HepG2 (cell line): ENCODE measurements at regions of chr2 and their contacts with region 1.

Region 1: DNA sequence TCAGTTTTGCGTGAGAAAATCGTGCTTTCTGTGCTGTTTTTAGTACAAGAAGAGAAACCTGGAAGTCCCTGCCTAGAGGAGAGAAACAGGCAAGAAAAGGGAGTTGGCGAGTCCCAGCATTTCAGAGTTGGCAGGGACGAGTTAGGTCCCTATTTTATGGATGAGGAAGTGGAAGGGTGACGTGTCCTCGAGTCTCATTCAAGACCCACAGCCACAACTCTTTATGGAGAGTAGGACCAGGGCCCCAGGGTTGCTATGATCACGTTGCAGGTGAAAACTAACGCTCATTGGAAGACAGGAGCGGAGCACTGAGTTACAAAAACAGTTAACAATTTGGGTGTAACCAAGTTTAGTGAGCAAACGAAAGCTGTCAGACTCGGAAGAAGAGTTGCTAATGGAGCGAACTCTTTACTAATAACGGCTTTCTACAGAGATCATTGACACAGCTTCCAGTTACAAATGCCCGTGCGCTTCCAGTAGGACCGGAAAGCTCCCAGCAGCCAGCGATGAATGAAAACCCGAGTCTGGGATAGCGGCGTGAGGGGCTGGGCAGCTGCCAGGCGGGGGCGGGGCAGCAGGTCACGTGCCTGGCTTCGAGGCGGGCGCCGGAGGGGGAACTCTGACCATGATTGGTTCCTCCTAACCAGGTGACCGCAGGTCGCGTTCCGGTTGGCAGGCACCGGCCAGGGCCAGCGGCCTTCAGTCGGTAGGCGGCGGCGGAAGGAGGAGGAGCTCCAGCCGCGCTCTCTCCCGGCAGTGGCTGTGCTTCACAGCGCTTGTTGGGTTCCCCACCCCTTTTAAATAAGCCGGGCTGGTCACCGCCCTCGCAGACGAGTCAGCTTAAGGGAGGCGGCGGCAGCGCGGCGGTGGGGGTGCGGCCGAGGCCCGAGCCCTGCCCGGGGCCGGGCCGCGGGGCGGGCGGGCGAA is at the start of gene CCNYL1:
- DNase-seq: peak; percentile 99
- ATAC-seq: peak; percentile 96
- H3K4me3 ChIP-seq: peak within 1 kb of the TSS; percentile 86 to 97 (median 91)
- H3K27ac ChIP-seq: peak within 1 kb of the TSS; percentile 96
- H3K4me1 ChIP-seq: peaks cover 40% of the 10 kb centered on the region
- H3K27me3 ChIP-seq: no peaks in the 10 kb centered on the region; a peak in 1 of 5 replicates
- CTCF ChIP-seq: peak; percentile 34
- EP300 ChIP-seq: no peak
- POLR2A ChIP-seq: peak; percentile 94
- RAD21 ChIP-seq: 0 out of 2 replicates have a peak, but pooled peaks have one; percentile 20
- total RNA-seq, gene CCNYL1: 12.5 and 20.2 TPM in 2 replicates

Region 2: GRCh38 chr2:207625018-207625907 is 85.8 kb before region 1 on chr2 and contains the start of gene METTL21A:
- CTCF ChIA-PET with region 1: interaction called, 3 read pairs
- POLR2A ChIA-PET with region 1: interaction called, 67 read pairs
- in situ Hi-C with region 1: loop called (anchors 5 kb)
- intact Hi-C with region 1: loop called (anchors 1 kb)
- DNase-seq: peak; percentile 94
- ATAC-seq: peak; percentile 80
- H3K4me3 ChIP-seq: peak within 1 kb of the TSS; percentile 80 to 92 (median 89)
- H3K27ac ChIP-seq: peak within 1 kb of the TSS; percentile 87
- H3K4me1 ChIP-seq: peaks cover 66% of the 10 kb centered on the region
- H3K27me3 ChIP-seq: no peaks in the 10 kb centered on the region; a peak in 1 of 5 replicates
- CTCF ChIP-seq: peak; percentile 92
- EP300 ChIP-seq: peak in 1 of 2 experiments; percentile 68; a peak in 3 of 4 replicates
- POLR2A ChIP-seq: peak; percentile 83 to 88
- RAD21 ChIP-seq: peak; percentile 69
- total RNA-seq, gene METTL21A: 61.2 and 65.1 TPM in 2 replicates

Region 3: GRCh38 chr2:207683879-207684627 is 27.0 kb before region 1 on chr2:
- CTCF ChIA-PET with region 1: no interaction called
- POLR2A ChIA-PET with region 1: interaction called, 20 read pairs
- in situ Hi-C with region 1: no loop called
- intact Hi-C with region 1: no loop called
- DNase-seq: peak; percentile 84
- ATAC-seq: peak; percentile 91
- H3K4me3 ChIP-seq: 0 out of 6 replicates have a peak overlapping the region, but pooled peaks of 1 of the 3 experiments have one; percentile 23
- H3K27ac ChIP-seq: no peak overlapping the region
- H3K4me1 ChIP-seq: peaks cover 18% of the 10 kb centered on the region
- H3K27me3 ChIP-seq: no peaks in the 10 kb centered on the region
- CTCF ChIP-seq: no peak
- EP300 ChIP-seq: peak; percentile 34 to 44; a peak in 2 of 4 replicates
- POLR2A ChIP-seq: no peak
- RAD21 ChIP-seq: no peak

Region 4: GRCh38 chr2:207725873-207726578 is 14.9 kb after region 1 on chr2:
- CTCF ChIA-PET with region 1: no interaction called
- POLR2A ChIA-PET with region 1: interaction called, 32 read pairs
- in situ Hi-C with region 1: no loop called
- intact Hi-C with region 1: no loop called
- DNase-seq: no peak
- ATAC-seq: peak; percentile 35; the same call in 2 of the 3 replicates
- H3K4me3 ChIP-seq: no peak overlapping the region
- H3K27ac ChIP-seq: peak overlapping the region; percentile 8
- H3K4me1 ChIP-seq: peaks cover 15% of the 10 kb centered on the region
- H3K27me3 ChIP-seq: no peaks in the 10 kb centered on the region
- CTCF ChIP-seq: no peak
- EP300 ChIP-seq: no peak
- POLR2A ChIP-seq: no peak
- RAD21 ChIP-seq: no peak

Region 5: GRCh38 chr2:207813221-207813916 is 102.3 kb after region 1 on chr2:
- CTCF ChIA-PET with region 1: no interaction called
- POLR2A ChIA-PET with region 1: no interaction called
- in situ Hi-C with region 1: no loop called
- intact Hi-C with region 1: no loop called
- DNase-seq: no peak
- ATAC-seq: 0 out of 3 replicates have a peak, but pooled peaks have one; percentile 6
- H3K4me3 ChIP-seq: no peak overlapping the region
- H3K27ac ChIP-seq: no peak overlapping the region
- H3K4me1 ChIP-seq: peaks cover 88% of the 10 kb centered on the region
- H3K27me3 ChIP-seq: no peaks in the 10 kb centered on the region
- CTCF ChIP-seq: no peak; the same call in 1 of the 2 replicates
- EP300 ChIP-seq: no peak
- POLR2A ChIP-seq: no peak
- RAD21 ChIP-seq: 0 out of 2 replicates have a peak, but pooled peaks have one; percentile 12

Region 6: DNA sequence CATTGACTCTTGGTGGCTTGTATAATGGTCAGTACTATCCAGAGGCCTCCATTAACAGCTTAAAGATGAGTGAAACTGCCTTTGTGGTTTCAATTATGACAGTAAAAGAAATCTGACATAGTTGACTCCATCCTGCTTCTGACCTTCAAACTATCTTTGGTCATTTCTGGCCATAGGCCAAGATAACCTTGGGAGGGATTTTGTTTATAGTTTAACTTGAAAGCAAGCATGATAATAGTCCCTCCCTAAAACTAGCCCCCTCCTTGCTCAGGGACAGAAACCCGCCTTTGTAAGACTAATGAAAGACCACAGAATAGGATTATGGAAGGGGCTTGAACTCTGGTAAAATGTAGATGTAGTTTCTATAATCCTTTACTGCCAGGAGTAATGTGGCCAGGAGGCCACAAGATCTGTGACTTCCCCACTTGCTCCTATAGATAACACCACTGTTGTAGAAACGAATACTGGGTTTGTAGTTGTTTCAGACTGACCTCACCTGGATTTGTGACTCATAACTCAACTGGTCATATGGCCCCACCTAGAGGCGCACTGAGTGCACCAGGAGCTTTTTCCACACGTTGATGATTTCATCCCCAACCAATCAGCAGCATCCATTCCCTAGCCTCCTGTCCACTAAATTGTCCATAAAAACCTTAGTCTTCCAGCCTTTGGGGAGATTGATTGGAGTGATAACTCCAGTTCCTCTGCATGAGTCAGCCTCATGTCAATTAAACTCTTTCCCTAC is 322.9 kb after region 1 on chr2:
- CTCF ChIA-PET with region 1: no interaction called
- POLR2A ChIA-PET with region 1: interaction called, 10 read pairs
- in situ Hi-C with region 1: no loop called
- intact Hi-C with region 1: no loop called
- DNase-seq: peak; percentile 97
- ATAC-seq: peak; percentile 90
- H3K4me3 ChIP-seq: peak overlapping the region; percentile 4 to 16 (median 14); a peak in 2 of 6 replicates
- H3K27ac ChIP-seq: peak overlapping the region; percentile 70
- H3K4me1 ChIP-seq: peaks cover 70% of the 10 kb centered on the region
- H3K27me3 ChIP-seq: no peaks in the 10 kb centered on the region
- CTCF ChIP-seq: peak; percentile 98
- EP300 ChIP-seq: peak; percentile 53 to 55; a peak in 3 of 4 replicates
- POLR2A ChIP-seq: no peak
- RAD21 ChIP-seq: peak; percentile 91